Ascending aorta (tissue), 2 donors: ENCODE measurements at regions of chr4 and their contacts with region 1.

Region 1: DNA sequence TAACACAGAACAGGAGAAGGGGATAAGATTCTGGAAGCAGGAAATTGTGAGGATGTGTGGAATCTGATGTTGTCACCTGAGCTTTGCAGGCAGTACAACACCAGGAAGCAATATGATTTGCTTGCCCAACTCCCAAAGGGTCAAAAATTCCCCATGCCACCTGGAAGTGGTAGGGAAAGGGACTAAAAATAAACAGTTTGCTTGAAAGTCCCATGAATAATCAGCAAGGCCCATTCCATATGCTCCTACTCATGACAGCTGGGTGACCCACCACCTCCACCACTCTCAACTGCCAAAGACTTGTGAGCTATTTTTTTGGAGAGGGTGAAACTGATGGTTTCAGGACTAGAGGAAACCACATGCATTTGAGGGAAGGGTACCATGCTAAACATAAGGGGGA is 168.4 kb downstream of the KCNIP4 start:
- DNase-seq: no peak
- H3K4me3 ChIP-seq: no peak overlapping the region
- H3K27ac ChIP-seq: no peak overlapping the region
- H3K4me1 ChIP-seq: no peaks in the 10 kb centered on the region
- H3K27me3 ChIP-seq: no peaks in the 10 kb centered on the region
- CTCF ChIP-seq: no peak

Region 2: GRCh38 chr4:21888195-21888976 is 108.2 kb after region 1 on chr4:
- intact Hi-C with region 1: no loop called
- DNase-seq: no peak
- H3K4me3 ChIP-seq: no peak overlapping the region
- H3K27ac ChIP-seq: no peak overlapping the region
- H3K4me1 ChIP-seq: no peaks in the 10 kb centered on the region
- H3K27me3 ChIP-seq: no peaks in the 10 kb centered on the region
- CTCF ChIP-seq: no peak

Region 3: GRCh38 chr4:22688236-22688635 is 908.1 kb after region 1 on chr4:
- intact Hi-C with region 1: loop called (anchors 10 kb)
- DNase-seq: no peak
- H3K4me3 ChIP-seq: no peak overlapping the region
- H3K27ac ChIP-seq: no peak overlapping the region
- H3K4me1 ChIP-seq: no peaks in the 10 kb centered on the region
- H3K27me3 ChIP-seq: no peaks in the 10 kb centered on the region
- CTCF ChIP-seq: no peak